PC-3 (cell line): ENCODE measurements at regions of chr10 and their contacts with region 1.

Region 1: GRCh38 chr10:61475449-61475873 is 22.3 kb upstream of the TMEM26 start:
- DNase-seq: peak; percentile 98
- ATAC-seq: peak; percentile 41
- H3K4me3 ChIP-seq: no peak overlapping the region
- H3K27ac ChIP-seq: no peak overlapping the region
- H3K4me1 ChIP-seq: peaks cover 36% of the 10 kb centered on the region
- H3K27me3 ChIP-seq: no peaks in the 10 kb centered on the region
- CTCF ChIP-seq: no peak

Region 2: GRCh38 chr10:61188691-61189090 is 286.8 kb before region 1 on chr10:
- CTCF ChIA-PET with region 1: no interaction called
- POLR2A ChIA-PET with region 1: no interaction called
- intact Hi-C with region 1: no loop called
- DNase-seq: peak; percentile 16
- ATAC-seq: peak; percentile 61
- H3K4me3 ChIP-seq: no peak overlapping the region
- H3K27ac ChIP-seq: no peak overlapping the region
- H3K4me1 ChIP-seq: no peaks in the 10 kb centered on the region
- H3K27me3 ChIP-seq: no peaks in the 10 kb centered on the region
- CTCF ChIP-seq: no peak

Region 3: GRCh38 chr10:61385231-61386001 is 90.0 kb before region 1 on chr10:
- CTCF ChIA-PET with region 1: no interaction called
- POLR2A ChIA-PET with region 1: no interaction called
- intact Hi-C with region 1: no loop called
- DNase-seq: no peak
- ATAC-seq: 0 out of 2 replicates have a peak, but pooled peaks have one; percentile 33
- H3K4me3 ChIP-seq: no peak overlapping the region
- H3K27ac ChIP-seq: no peak overlapping the region
- H3K4me1 ChIP-seq: no peaks in the 10 kb centered on the region
- H3K27me3 ChIP-seq: no peaks in the 10 kb centered on the region
- CTCF ChIP-seq: no peak

Region 4: GRCh38 chr10:61397175-61397986 is 78.1 kb before region 1 on chr10:
- CTCF ChIA-PET with region 1: no interaction called
- POLR2A ChIA-PET with region 1: no interaction called
- intact Hi-C with region 1: loop called (anchors 1 kb)
- DNase-seq: no peak
- ATAC-seq: no peak
- H3K4me3 ChIP-seq: no peak overlapping the region
- H3K27ac ChIP-seq: no peak overlapping the region
- H3K4me1 ChIP-seq: peaks cover 33% of the 10 kb centered on the region
- H3K27me3 ChIP-seq: no peaks in the 10 kb centered on the region
- CTCF ChIP-seq: no peak

Region 5: GRCh38 chr10:61407601-61408000 is 67.9 kb before region 1 on chr10:
- CTCF ChIA-PET with region 1: no interaction called
- POLR2A ChIA-PET with region 1: no interaction called
- intact Hi-C with region 1: no loop called
- DNase-seq: peak; percentile 38
- ATAC-seq: peak; percentile 64
- H3K4me3 ChIP-seq: no peak overlapping the region
- H3K27ac ChIP-seq: no peak overlapping the region
- H3K4me1 ChIP-seq: 0 out of 2 replicates have a peak, but pooled peaks cover 4% of the 10 kb centered on the region
- H3K27me3 ChIP-seq: no peaks in the 10 kb centered on the region
- CTCF ChIP-seq: no peak

Region 6: DNA sequence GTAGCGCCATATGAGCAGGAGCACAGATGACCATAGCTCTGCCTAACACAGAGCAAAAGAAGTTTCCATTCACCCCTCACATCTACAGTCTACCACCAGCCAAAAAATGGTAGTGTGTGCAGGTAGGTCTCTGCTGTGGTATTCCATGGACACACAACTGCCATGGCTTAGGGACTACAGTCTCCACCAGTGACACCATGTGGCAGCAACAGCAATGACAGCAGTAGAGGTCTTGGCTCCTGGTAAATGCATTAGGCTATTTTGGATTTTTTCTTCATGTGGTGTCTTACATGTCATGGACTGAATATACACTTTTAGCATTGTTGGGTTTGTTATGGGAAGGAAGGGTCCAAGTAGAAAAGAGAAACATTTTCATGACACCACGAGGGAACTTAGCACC is 117.1 kb after region 1 on chr10:
- CTCF ChIA-PET with region 1: no interaction called
- POLR2A ChIA-PET with region 1: no interaction called
- intact Hi-C with region 1: loop called (anchors 1 kb)
- DNase-seq: peak; percentile 91
- ATAC-seq: peak; percentile 83
- H3K4me3 ChIP-seq: no peak overlapping the region
- H3K27ac ChIP-seq: no peak overlapping the region
- H3K4me1 ChIP-seq: peaks cover 18% of the 10 kb centered on the region
- H3K27me3 ChIP-seq: no peaks in the 10 kb centered on the region; the same call in 1 of the 2 replicates
- CTCF ChIP-seq: peak; percentile 100

Region 7: GRCh38 chr10:61733358-61733940 is 258.0 kb after region 1 on chr10:
- CTCF ChIA-PET with region 1: interaction called, 4 read pairs
- POLR2A ChIA-PET with region 1: no interaction called
- intact Hi-C with region 1: loop called (anchors 1 kb)
- DNase-seq: peak; percentile 96
- ATAC-seq: peak; percentile 88
- H3K4me3 ChIP-seq: no peak overlapping the region
- H3K27ac ChIP-seq: no peak overlapping the region
- H3K4me1 ChIP-seq: no peaks in the 10 kb centered on the region
- H3K27me3 ChIP-seq: 0 out of 2 replicates have a peak, but pooled peaks cover 7% of the 10 kb centered on the region
- CTCF ChIP-seq: peak; percentile 100

Region 8: DNA sequence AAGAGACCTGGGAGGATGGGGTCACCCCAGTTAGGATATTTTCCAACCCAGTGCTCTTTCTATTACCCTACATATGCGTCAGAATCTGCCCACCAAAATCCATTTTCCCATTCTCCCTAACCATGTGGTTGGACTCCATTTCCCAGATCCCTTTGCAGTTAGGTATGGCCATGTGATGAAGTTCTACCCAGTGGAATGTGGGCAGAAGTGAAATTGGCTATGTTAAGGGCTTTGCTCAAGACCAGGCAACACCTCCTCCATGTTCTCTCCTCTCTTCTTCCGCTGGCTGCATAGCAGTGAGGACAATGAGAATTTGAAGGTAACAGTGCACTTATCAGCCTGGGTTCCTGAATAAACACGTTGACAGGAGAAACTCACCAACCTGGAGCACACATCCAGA is 298.6 kb after region 1 on chr10:
- CTCF ChIA-PET with region 1: no interaction called
- POLR2A ChIA-PET with region 1: no interaction called
- intact Hi-C with region 1: no loop called
- DNase-seq: no peak
- ATAC-seq: no peak
- H3K4me3 ChIP-seq: no peak overlapping the region
- H3K27ac ChIP-seq: no peak overlapping the region
- H3K4me1 ChIP-seq: no peaks in the 10 kb centered on the region
- H3K27me3 ChIP-seq: no peaks in the 10 kb centered on the region
- CTCF ChIP-seq: no peak